Cardiac septum (tissue), 1 donor: ENCODE measurements at regions of chr12 and their contacts with region 1.

Region 1: DNA sequence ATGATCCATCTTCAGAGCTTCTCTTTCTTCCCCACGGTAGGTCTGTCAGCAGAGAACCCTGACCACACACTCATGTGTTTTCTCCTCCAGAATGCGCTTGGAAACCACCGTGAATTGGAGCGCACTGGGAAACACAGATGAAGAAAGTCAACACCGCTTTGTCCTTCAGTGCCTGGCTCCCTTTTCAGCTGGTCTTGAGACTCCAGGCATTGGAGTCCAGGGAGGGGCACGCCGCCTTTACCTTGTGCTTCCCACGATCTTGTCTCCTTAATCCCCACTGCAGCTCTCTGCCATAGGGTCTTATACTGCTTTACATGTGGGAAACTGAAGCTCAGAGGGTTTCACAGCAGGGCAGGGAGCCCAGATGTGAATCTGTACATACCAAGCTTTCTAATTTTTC is 1.1 kb downstream of the FAM90A1 start:
- DNase-seq: no peak

Region 2: GRCh38 chr12:8108808-8109398 is 117.5 kb before region 1 on chr12:
- intact Hi-C with region 1: loop called (anchors 10 kb)
- DNase-seq: peak; percentile 82

Region 3: GRCh38 chr12:8687846-8688601 is 461.7 kb after region 1 on chr12:
- intact Hi-C with region 1: no loop called
- DNase-seq: no peak